ENCODE measurements at regions of chr7 and their contacts with region 1.

Region 1: GRCh38 chr7:94276795-94277194 is 117.9 kb upstream of the COL1A2 start:
- DNase-seq: peak; percentile 59
- ATAC-seq: peak; percentile 95
- H3K4me3 ChIP-seq: no peak overlapping the region
- H3K27ac ChIP-seq: no peak overlapping the region
- H3K4me1 ChIP-seq: no peaks in the 10 kb centered on the region
- H3K27me3 ChIP-seq: peaks cover 31% of the 10 kb centered on the region; the same call in 1 of the 2 replicates
- CTCF ChIP-seq: peak; percentile 67

Region 2: GRCh38 chr7:93622036-93623033 is 654.5 kb before region 1 on chr7:
- CTCF ChIA-PET with region 1: no interaction called
- POLR2A ChIA-PET with region 1: no interaction called
- intact Hi-C with region 1: loop called (anchors 5 kb)
- DNase-seq: peak; percentile 31
- ATAC-seq: peak; percentile 94
- H3K4me3 ChIP-seq: no peak overlapping the region
- H3K27ac ChIP-seq: no peak overlapping the region
- H3K4me1 ChIP-seq: no peaks in the 10 kb centered on the region
- H3K27me3 ChIP-seq: no peaks in the 10 kb centered on the region
- CTCF ChIP-seq: peak; percentile 58

Region 3: DNA sequence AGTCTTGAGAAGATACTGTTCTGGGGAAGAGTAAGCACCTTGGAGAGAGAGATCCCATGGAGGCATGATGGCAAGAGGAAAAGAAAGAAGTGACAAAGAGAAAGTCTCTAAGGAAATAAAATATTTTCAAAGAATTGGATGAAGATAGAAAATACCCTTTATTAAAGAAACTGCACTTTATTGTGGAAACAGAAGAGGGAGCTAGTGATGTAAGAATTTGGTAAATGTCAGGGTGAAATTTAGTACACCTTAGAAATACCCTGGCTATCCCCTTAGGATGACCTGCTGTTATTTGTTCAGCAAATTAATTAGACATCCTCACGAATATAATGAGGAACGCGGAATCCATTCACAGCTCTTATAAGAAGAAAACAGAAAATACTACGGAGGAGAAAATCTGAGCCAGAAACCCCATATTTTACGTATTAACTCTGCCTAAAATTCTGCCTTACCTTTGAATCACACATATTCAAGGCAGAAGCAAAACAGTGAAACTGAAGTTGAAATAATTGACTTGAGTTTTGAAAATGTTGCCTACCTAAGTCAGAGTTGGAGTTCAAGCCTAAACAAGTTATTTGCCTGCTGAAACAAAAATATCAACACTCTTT is 476.9 kb before region 1 on chr7:
- CTCF ChIA-PET with region 1: no interaction called
- POLR2A ChIA-PET with region 1: no interaction called
- intact Hi-C with region 1: loop called (anchors 1 kb)
- DNase-seq: peak; percentile 51
- ATAC-seq: peak; percentile 38; the same call in 1 of the 2 replicates
- H3K4me3 ChIP-seq: no peak overlapping the region
- H3K27ac ChIP-seq: no peak overlapping the region
- H3K4me1 ChIP-seq: no peaks in the 10 kb centered on the region
- H3K27me3 ChIP-seq: peaks cover 12% of the 10 kb centered on the region; the same call in 1 of the 2 replicates
- CTCF ChIP-seq: peak; percentile 71

Region 4: GRCh38 chr7:93883078-93883916 is 393.5 kb before region 1 on chr7:
- CTCF ChIA-PET with region 1: no interaction called
- POLR2A ChIA-PET with region 1: no interaction called
- intact Hi-C with region 1: no loop called
- DNase-seq: no peak
- ATAC-seq: no peak
- H3K4me3 ChIP-seq: no peak overlapping the region
- H3K27ac ChIP-seq: no peak overlapping the region
- H3K4me1 ChIP-seq: 0 out of 2 replicates have a peak, but pooled peaks cover 4% of the 10 kb centered on the region
- H3K27me3 ChIP-seq: no peaks in the 10 kb centered on the region
- CTCF ChIP-seq: no peak

Region 5: DNA sequence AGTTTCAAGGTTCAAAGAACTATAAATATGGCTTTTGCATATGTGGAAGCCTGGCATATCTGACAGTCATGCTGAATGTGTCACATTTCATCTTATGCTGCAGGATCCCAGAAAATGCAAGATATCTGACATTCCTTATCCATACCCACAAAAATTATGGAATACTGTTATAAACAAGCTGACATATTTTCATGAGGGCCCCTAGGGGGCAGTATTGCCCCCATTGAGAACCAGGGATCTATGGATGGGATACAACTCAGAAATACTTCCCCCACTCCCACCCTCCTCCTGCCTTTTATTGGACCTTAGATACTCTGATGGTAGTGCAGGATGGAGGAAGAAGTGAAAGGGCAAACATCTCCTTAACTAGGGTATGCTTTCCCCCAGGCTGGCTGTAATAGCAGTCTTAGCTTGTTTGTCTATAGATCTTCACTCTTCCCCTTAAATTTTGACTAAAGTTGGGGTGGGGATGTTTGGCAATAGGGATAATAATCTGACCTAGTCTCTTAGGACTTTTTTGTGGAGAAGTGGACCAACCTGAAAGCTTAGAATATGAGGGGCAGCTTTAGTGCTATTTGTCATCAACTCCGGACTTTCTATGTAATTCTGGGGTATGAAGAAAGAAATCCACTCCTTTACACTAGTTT is 373.9 kb before region 1 on chr7:
- CTCF ChIA-PET with region 1: no interaction called
- POLR2A ChIA-PET with region 1: no interaction called
- intact Hi-C with region 1: loop called (anchors 2 kb)
- DNase-seq: peak; percentile 52
- ATAC-seq: peak; percentile 81
- H3K4me3 ChIP-seq: no peak overlapping the region
- H3K27ac ChIP-seq: no peak overlapping the region
- H3K4me1 ChIP-seq: no peaks in the 10 kb centered on the region
- H3K27me3 ChIP-seq: peaks cover 4% of the 10 kb centered on the region; the same call in 1 of the 2 replicates
- CTCF ChIP-seq: peak; percentile 85

Region 6: DNA sequence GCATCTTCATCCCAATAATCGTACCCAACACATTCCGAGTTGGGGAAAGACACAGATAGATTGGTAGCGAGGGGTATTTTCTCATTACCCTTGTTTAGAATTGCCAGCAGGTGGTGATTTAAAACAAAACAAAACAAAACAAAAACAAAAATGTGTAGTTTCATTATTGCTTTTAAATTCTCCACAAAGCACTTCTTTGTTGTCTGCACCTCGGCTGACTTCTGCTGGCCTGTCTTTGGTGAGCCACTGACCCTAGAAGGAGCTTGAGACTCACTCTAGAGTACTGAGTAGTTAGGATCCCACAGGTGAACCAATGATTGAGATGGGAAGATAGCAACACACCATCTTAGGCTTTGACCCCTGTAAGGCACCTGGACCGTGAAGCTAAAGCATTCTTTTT is 167.2 kb before region 1 on chr7:
- CTCF ChIA-PET with region 1: no interaction called
- POLR2A ChIA-PET with region 1: no interaction called
- intact Hi-C with region 1: loop called (anchors 5 kb)
- DNase-seq: no peak
- ATAC-seq: no peak
- H3K4me3 ChIP-seq: no peak overlapping the region
- H3K27ac ChIP-seq: no peak overlapping the region
- H3K4me1 ChIP-seq: no peaks in the 10 kb centered on the region
- H3K27me3 ChIP-seq: no peaks in the 10 kb centered on the region
- CTCF ChIP-seq: no peak

Region 7: DNA sequence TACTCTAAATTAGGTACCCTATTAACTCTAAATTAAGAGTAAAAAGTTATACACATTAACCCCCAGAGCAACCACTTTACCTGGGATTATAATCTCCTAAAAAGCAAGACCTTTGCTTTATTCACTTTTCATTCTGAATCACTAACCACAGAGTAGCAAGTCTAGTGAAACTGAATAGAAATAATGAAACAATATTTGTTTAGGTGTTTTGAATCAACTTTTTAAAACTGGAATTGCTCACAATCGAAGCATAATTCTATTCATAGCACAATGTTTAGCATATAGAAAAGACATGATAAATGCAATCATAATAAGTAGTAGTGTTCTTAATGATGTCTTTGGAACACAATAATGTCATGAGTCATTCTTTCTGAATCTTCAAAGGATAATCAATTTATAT is 195.8 kb after region 1 on chr7:
- CTCF ChIA-PET with region 1: no interaction called
- POLR2A ChIA-PET with region 1: no interaction called
- intact Hi-C with region 1: no loop called
- DNase-seq: no peak
- ATAC-seq: no peak
- H3K4me3 ChIP-seq: no peak overlapping the region
- H3K27ac ChIP-seq: no peak overlapping the region
- H3K4me1 ChIP-seq: no peaks in the 10 kb centered on the region
- H3K27me3 ChIP-seq: no peaks in the 10 kb centered on the region
- CTCF ChIP-seq: no peak

Measured in PC-3 (cell line).